Naive thymus-derived CD4-positive, alpha-beta T cell (primary cell): ENCODE measurements at regions of chr11 and their contacts with region 1.

Region 1: GRCh38 chr11:63553741-63554151 is 9.4 kb downstream of the PLAAT2 start:
- DNase-seq: peak in 7 of 9 donors; percentile 41 to 61 (median 53)
- ATAC-seq: peak; percentile 85
- H3K4me3 ChIP-seq: peak overlapping the region; percentile 51
- H3K4me3 Mint-ChIP-seq: peak overlapping the region; percentile 78 to 95 (median 88)
- H3K27ac ChIP-seq: peak overlapping the region; percentile 54
- H3K27ac Mint-ChIP-seq: peak overlapping the region; percentile 88 to 100 (median 96)
- H3K4me1 ChIP-seq: peaks cover 35 to 51% of the 10 kb centered on the region in 2 donors
- H3K4me1 Mint-ChIP-seq: peaks cover 33 to 81% (median 77%) of the 10 kb centered on the region in 7 donors
- H3K27me3 ChIP-seq: no peaks in the 10 kb centered on the region
- H3K27me3 Mint-ChIP-seq: no peaks in the 10 kb centered on the region

Region 2: GRCh38 chr11:63445720-63446119 is 108.0 kb before region 1 on chr11:
- CTCF ChIA-PET with region 1: no interaction called
- POLR2A ChIA-PET with region 1: no interaction called
- intact Hi-C with region 1: no loop called
- DNase-seq: peak in 1 of 9 donors; percentile 23
- ATAC-seq: no peak
- H3K4me3 ChIP-seq: no peak overlapping the region
- H3K4me3 Mint-ChIP-seq: no peak overlapping the region
- H3K27ac ChIP-seq: no peak overlapping the region
- H3K27ac Mint-ChIP-seq: no peak overlapping the region
- H3K4me1 ChIP-seq: no peaks in the 10 kb centered on the region
- H3K4me1 Mint-ChIP-seq: peaks cover 0 to 24% (median 10%) of the 10 kb centered on the region in 7 donors
- H3K27me3 ChIP-seq: no peaks in the 10 kb centered on the region
- H3K27me3 Mint-ChIP-seq: peaks cover 0 to 10% (median 3%) of the 10 kb centered on the region in 5 donors

Region 3: DNA sequence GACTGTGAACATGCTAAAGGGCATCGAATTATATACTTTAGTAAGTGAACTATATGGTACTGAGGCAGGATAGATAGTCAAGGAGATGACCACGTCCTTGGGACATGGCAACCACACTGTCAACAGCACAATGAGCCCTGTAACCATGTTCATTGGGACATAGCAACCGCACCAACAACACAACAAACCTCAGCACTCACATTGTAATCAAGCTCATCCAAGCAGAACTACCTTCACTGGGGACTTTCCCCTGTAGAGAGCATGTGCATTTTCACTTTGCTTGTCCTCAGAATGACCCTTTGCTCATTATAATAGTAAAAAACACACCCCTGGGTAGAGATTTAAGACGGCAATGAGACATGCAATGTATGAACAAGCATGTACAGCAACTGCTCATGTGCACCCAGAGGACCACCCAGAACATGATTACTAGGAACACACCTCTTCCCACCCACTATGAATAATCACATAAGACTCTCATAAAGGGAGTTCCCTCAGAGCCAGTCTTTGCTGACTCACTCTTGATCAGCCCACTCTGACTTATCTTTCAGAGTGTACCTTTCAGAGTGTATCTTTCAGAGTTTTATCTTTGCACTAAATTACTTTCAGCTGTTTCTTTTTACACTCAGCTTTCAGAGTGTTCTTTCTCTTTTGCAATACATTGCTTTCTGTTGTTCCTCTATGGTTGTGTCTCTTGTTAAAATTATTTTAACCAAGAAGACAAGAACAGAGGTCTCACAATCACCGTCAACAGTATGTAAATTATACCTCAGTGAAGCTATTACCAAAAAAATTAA is 13.5 kb after region 1 on chr11:
- CTCF ChIA-PET with region 1: interaction called, 3 read pairs
- POLR2A ChIA-PET with region 1: interaction called, 6 read pairs
- intact Hi-C with region 1: loop called in 1 of 2 experiments (anchors 1 kb)
- DNase-seq: peak in 8 of 9 donors; percentile 31 to 84 (median 62)
- ATAC-seq: peak; percentile 88
- H3K4me3 ChIP-seq: no peak overlapping the region
- H3K4me3 Mint-ChIP-seq: peak overlapping the region in 9 of 10 donors; percentile 7 to 62 (median 42)
- H3K27ac ChIP-seq: peak overlapping the region; percentile 44
- H3K27ac Mint-ChIP-seq: peak overlapping the region; percentile 56 to 94 (median 86)
- H3K4me1 ChIP-seq: peaks cover 22 to 25% of the 10 kb centered on the region in 2 donors
- H3K4me1 Mint-ChIP-seq: peaks cover 26 to 55% (median 47%) of the 10 kb centered on the region in 7 donors
- H3K27me3 ChIP-seq: no peaks in the 10 kb centered on the region
- H3K27me3 Mint-ChIP-seq: peaks cover 0 to 19% (median 0%) of the 10 kb centered on the region in 5 donors